ENCODE measurements at regions of chr21 and their contacts with region 1.

Region 1: GRCh38 chr21:36630485-36631206 is 68.3 kb upstream of the SIM2 start:
- DNase-seq: peak; percentile 80
- ATAC-seq: no peak
- H3K4me3 Mint-ChIP-seq: no peak overlapping the region
- H3K27ac Mint-ChIP-seq: no peak overlapping the region
- H3K4me1 Mint-ChIP-seq: peaks cover 3% of the 10 kb centered on the region
- H3K27me3 Mint-ChIP-seq: peaks cover 3% of the 10 kb centered on the region

Region 2: DNA sequence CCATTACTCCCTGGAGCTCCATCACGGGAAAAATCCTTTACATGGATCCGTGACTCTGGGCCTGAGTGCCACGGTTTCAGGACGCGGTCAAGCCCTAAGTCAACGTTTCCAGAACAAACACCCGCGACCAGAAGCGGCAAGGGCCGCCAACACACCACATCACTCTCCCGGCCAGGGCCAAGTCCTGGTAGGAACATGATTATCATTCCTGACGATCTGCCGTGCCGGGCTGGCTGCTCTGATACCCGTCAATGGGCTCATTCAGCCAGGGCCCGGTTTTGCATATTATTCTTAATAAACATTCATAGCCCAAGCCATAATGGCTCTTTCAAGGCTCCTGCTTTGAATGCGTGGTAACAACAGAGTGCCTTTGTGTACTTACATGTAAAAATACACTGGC is 23.7 kb after region 1 on chr21:
- CTCF ChIA-PET with region 1: interaction called, 10 read pairs
- POLR2A ChIA-PET with region 1: no interaction called
- intact Hi-C with region 1: no loop called
- DNase-seq: no peak
- ATAC-seq: no peak
- H3K4me3 Mint-ChIP-seq: no peak overlapping the region
- H3K27ac Mint-ChIP-seq: no peak overlapping the region
- H3K4me1 Mint-ChIP-seq: no peaks in the 10 kb centered on the region
- H3K27me3 Mint-ChIP-seq: peaks cover 7% of the 10 kb centered on the region

Region 3: GRCh38 chr21:36692835-36693488 is 62.3 kb after region 1 on chr21:
- CTCF ChIA-PET with region 1: interaction called, 12 read pairs
- POLR2A ChIA-PET with region 1: no interaction called
- intact Hi-C with region 1: no loop called
- DNase-seq: peak; percentile 26
- ATAC-seq: no peak
- H3K4me3 Mint-ChIP-seq: no peak overlapping the region
- H3K27ac Mint-ChIP-seq: no peak overlapping the region
- H3K4me1 Mint-ChIP-seq: peaks cover 9% of the 10 kb centered on the region
- H3K27me3 Mint-ChIP-seq: peaks cover 77% of the 10 kb centered on the region

Region 4: DNA sequence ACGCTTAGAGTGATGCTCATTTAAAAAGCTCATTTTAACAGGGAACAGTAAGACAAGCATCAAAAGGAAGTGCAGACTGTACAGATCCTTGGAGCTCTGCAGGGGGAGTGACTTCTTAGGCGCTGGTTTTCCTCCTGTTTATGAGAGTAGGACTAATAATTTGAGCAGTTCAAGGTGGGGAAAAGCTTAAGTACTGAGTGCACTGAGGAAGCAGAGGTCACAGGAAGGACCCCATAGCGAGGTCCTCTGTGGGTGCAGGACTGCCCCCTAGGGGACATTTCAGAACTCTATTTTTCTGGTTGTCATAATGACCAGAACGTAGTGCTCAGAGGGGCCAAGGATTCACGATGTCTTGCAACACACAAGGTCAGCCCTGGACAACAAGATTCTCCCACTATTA is 223.7 kb after region 1 on chr21:
- CTCF ChIA-PET with region 1: interaction called, 7 read pairs
- POLR2A ChIA-PET with region 1: no interaction called
- intact Hi-C with region 1: loop called (anchors 2 to 5 kb)
- DNase-seq: peak; percentile 49
- ATAC-seq: peak; percentile 35
- H3K4me3 Mint-ChIP-seq: no peak overlapping the region
- H3K27ac Mint-ChIP-seq: no peak overlapping the region
- H3K4me1 Mint-ChIP-seq: peaks cover 31% of the 10 kb centered on the region
- H3K27me3 Mint-ChIP-seq: no peaks in the 10 kb centered on the region

Measured in activated CD4-positive, alpha-beta T cell treated with anti-CD3 and anti-CD28 coated beads for 36 hours (primary cell).